ENCODE measurements at regions of chr14 and their contacts with region 1.

Region 1: DNA sequence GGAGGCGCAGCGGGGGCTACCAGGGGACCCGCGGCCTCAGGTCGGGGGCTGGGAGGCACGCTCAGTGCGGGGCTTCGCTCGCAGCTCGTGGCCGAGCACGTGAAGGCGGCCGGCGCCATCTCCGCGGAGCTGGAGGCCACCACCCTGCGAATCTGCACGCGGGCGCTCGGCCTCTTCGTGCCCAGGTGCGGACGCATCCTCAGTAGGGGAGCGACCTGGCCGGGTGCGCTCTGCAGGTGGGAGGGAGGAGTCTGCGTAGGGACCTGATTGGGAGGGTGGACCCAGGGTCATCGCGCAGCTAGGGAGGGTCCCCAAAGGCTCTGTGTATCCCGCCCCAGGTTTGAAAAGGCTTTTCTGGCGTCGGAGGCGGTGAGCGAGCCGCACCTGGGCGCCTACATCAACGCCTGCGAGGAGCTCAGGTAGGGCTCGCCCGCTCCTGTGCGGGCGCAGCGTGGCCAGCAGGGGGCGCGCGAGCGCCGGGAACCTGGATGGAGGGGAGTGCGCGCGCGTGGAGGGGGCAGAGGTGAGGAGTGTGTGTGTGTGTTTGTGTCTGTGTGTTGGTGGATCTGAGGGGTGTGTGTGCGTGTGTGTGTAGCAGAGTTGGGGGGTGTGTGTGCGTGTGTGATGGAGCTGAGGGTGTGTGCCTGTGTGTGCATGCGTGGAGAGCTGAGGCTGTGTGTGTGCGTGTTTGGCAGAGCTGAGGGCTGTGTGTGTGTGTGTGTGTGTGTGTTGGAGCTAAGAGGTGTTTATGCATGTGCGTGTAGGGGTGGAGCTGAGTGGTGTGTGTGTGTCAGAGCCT is 10.3 kb downstream of the EXOC3L4 start:
- DNase-seq: peak; percentile 74
- ATAC-seq: peak; percentile 88
- H3K4me3 Mint-ChIP-seq: no peak overlapping the region
- H3K27ac Mint-ChIP-seq: peak overlapping the region; percentile 39
- H3K4me1 Mint-ChIP-seq: peaks cover 6% of the 10 kb centered on the region
- H3K27me3 Mint-ChIP-seq: peaks cover 30% of the 10 kb centered on the region

Region 2: DNA sequence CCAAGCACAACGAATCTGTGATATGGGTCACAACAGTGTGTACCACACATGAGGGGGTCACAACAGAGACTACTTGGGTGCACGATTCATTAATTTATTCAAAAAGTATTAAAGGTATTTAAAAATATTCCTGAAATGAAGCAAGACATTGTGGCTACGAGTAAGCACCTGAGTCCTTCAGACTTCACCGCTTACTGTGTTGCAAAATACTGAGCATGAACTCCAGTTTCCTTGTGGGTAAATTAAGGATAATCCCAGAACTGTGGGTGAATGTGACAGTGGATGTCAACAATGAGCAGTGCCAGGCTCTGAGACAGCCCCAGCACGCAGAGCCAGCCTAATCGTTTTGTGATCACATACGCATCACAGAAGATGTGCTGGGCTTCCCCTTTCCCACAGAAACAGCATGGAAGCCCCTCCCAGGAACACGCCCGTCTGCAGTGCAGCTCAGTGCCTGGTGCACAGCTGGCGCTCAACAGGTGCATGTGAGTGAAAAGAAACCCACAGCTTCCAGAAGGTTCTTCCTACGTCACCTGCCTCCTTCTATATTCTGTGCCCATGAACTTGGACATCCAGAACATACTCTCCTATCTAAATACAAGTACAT is 76.6 kb before region 1 on chr14:
- CTCF ChIA-PET with region 1: no interaction called
- POLR2A ChIA-PET with region 1: no interaction called
- DNase-seq: no peak
- ATAC-seq: no peak
- H3K4me3 Mint-ChIP-seq: no peak overlapping the region
- H3K27ac Mint-ChIP-seq: no peak overlapping the region
- H3K4me1 Mint-ChIP-seq: no peaks in the 10 kb centered on the region
- H3K27me3 Mint-ChIP-seq: peaks cover 7% of the 10 kb centered on the region

Region 3: DNA sequence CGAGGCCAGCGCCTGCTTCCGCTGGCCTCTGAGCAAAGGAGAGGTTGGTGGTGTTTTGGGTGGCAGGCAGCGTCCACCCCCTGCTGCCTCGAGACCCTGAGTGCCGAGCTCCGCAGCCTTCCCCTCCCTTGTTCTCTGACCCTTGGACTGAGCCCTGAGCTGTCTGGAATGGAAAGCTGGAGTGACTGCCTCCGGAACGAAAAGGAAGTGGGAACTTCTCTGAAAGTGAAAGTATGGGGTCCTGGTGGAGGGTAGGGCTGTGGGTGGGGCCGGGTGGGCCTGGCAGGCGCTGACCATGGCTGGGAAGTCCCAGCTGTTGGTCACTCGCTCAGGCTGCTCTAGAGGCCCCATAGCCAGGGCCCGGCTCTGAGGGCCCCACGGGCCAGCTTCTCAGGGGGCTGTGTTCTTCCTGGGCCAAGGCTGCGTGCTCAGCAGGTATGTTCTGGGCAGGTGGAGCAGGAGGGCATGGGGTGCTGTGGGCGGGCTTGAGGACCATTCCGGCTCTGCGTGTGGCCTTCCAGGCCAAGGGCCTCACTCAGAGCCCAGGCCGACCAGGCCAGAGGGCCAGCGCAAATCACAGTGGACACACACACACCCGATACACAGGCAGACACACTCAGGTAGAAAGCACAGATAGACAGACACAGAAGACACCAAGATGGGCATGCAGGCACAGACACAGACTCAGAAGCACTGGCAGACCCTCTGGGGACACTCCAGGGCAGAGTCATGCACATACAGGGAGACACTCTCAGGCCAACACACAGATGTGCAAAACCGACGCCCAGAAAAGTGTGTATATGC is 10.2 kb before region 1 on chr14 and contains the start of gene EXOC3L4:
- CTCF ChIA-PET with region 1: interaction called, 36 read pairs
- POLR2A ChIA-PET with region 1: no interaction called
- DNase-seq: no peak
- ATAC-seq: no peak
- H3K4me3 Mint-ChIP-seq: no peak within 1 kb of the TSS
- H3K27ac Mint-ChIP-seq: no peak within 1 kb of the TSS
- H3K4me1 Mint-ChIP-seq: peaks cover 10% of the 10 kb centered on the region
- H3K27me3 Mint-ChIP-seq: no peaks in the 10 kb centered on the region
- total RNA-seq, gene EXOC3L4: not detected

Region 4: GRCh38 chr14:103121846-103122584 is 17.2 kb after region 1 on chr14:
- CTCF ChIA-PET with region 1: interaction called, 11 read pairs
- POLR2A ChIA-PET with region 1: no interaction called
- DNase-seq: no peak
- ATAC-seq: no peak
- H3K4me3 Mint-ChIP-seq: no peak overlapping the region
- H3K27ac Mint-ChIP-seq: no peak overlapping the region
- H3K4me1 Mint-ChIP-seq: no peaks in the 10 kb centered on the region
- H3K27me3 Mint-ChIP-seq: peaks cover 19% of the 10 kb centered on the region

Region 5: GRCh38 chr14:103185051-103185992 is 80.5 kb after region 1 on chr14:
- CTCF ChIA-PET with region 1: interaction called, 17 read pairs
- POLR2A ChIA-PET with region 1: no interaction called
- DNase-seq: no peak
- ATAC-seq: no peak
- H3K4me3 Mint-ChIP-seq: no peak overlapping the region
- H3K27ac Mint-ChIP-seq: no peak overlapping the region
- H3K4me1 Mint-ChIP-seq: peaks cover 9% of the 10 kb centered on the region
- H3K27me3 Mint-ChIP-seq: peaks cover 41% of the 10 kb centered on the region

Measured in activated CD8-positive, alpha-beta T cell treated with anti-CD3 and anti-CD28 coated beads, Interleukin-2, amount 10 ng/mL, durations not matched to agents 7 days and 5 days (primary cell).